Ascending aorta (tissue), 2 donors: ENCODE measurements at regions of chr2 and their contacts with region 1.

Region 1: GRCh38 chr2:47043142-47043890 is 111.8 kb downstream of the STPG4 start:
- DNase-seq: peak in 1 of 2 donors; percentile 89
- H3K4me3 ChIP-seq: peak overlapping the region in 1 of 2 donors; percentile 24
- H3K27ac ChIP-seq: peak overlapping the region; percentile 92 to 97
- H3K4me1 ChIP-seq: peaks cover 22 to 40% of the 10 kb centered on the region in 2 donors
- H3K27me3 ChIP-seq: no peaks in the 10 kb centered on the region
- CTCF ChIP-seq: peak in 1 of 3 experiments; percentile 10

Region 2: GRCh38 chr2:47069628-47070154 is 26.4 kb after region 1 on chr2:
- intact Hi-C with region 1: loop called (anchors 1 kb)
- DNase-seq: peak in 1 of 2 donors; percentile 92
- H3K4me3 ChIP-seq: no peak overlapping the region
- H3K27ac ChIP-seq: peak overlapping the region; percentile 94 to 98
- H3K4me1 ChIP-seq: peaks cover 39 to 74% of the 10 kb centered on the region in 2 donors
- H3K27me3 ChIP-seq: no peaks in the 10 kb centered on the region
- CTCF ChIP-seq: no peak

Region 3: GRCh38 chr2:47225061-47225859 is 181.9 kb after region 1 on chr2:
- intact Hi-C with region 1: no loop called
- DNase-seq: peak in 1 of 2 donors; percentile 81
- H3K4me3 ChIP-seq: no peak overlapping the region
- H3K27ac ChIP-seq: no peak overlapping the region
- H3K4me1 ChIP-seq: peaks cover 0 to 14% of the 10 kb centered on the region in 2 donors
- H3K27me3 ChIP-seq: no peaks in the 10 kb centered on the region
- CTCF ChIP-seq: no peak